Posterior vena cava (tissue), 2 donors: ENCODE measurements at regions of chr7 and their contacts with region 1.

Region 1: GRCh38 chr7:112770084-112770483 is 20.1 kb downstream of the TMEM168 start:
- DNase-seq: no peak

Region 2: DNA sequence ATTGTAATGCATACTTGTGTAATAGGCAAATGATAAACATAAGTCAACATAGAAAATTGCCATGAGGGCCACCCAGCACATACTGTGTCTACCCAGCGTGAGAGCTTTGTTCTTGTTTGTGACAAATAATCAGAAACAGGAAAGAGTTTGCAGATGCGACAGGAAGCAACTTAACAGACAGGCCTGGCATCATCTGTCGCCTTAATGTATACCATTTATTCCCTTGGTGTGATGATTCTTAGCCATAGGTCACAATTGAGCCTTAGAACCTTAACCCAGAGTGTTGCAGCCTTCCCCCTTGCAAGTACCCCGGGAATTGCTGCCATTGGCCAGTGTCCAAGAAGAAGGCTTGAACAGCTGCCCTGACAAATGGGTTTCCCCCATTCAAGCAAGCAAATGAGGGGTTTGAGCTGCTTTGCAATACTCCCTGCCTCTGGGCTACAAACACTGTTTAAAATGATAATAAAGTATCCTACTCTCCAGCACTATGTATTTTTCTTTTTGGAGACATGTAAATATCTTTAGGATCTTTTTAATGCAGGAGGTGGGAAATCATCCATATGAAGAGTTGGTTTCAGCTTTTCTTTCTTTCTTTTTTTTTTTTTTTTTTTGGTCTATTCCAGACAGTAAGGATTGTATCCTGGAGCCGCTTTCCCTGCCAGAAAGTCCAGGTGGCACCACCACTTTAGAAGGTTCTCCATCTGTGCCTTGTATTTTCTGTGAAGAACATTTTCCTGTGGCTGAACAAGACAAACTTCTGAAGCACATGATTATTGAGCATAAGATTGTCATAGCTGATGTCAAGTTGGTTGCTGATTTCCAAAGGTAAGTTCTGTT is 483.6 kb before region 1 on chr7:
- intact Hi-C with region 1: no loop called
- DNase-seq: no peak

Region 3: DNA sequence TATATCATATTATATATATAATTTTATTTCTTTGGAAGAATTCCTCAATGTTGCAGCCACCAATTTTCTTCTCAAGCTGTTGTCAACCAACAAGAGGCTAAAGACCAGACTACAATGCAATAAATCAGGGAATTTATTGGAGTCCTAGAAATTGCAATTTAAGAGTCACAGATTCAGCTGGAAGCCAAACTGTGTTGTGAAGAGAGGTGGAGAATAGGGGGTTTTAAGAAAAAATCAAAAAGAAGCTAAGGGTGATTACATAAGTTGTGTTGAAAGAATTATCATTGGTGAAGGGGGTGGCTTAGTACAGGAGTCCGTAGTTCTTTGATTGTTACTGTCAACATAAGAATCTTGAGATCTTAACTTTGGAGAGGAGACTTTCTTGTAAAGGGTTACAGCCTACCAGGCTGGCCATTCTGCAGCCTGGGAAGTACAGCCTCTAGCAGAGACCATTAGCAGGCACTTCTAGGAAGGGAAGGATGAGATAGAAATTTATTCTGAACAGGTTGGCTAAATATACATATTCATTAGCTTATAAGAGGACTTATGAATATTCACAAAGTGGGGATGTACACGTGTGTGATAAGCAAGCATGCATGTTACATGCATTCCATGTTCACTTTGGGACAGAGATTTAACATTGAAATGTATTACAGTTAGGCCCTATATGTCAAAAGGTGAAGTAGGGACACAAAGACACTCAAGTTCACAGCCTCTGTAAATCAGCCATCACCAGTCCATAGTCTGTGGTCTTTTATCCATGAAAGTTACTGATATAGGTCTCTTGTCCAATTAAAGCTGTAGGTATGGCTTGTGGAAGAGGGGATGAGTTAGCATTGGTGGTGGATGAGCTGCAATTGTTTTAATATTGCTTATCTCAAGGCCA is 28.4 kb after region 1 on chr7:
- intact Hi-C with region 1: no loop called
- DNase-seq: no peak

Region 4: GRCh38 chr7:113752289-113752688 is 982.2 kb after region 1 on chr7:
- intact Hi-C with region 1: loop called in 1 of 2 experiments (anchors 10 kb)
- DNase-seq: no peak